Activated CD4-positive, alpha-beta T cell treated with anti-CD3 and anti-CD28 coated beads, Interleukin-2, amount 10 ng/mL, durations not matched to agents 7 days and 5 days (primary cell): ENCODE measurements at regions of chr4 and their contacts with region 1.

Region 1: GRCh38 chr4:10116580-10117358 is at the start of gene WDR1:
- DNase-seq: peak; percentile 90
- H3K4me3 Mint-ChIP-seq: peak within 1 kb of the TSS; percentile 99
- H3K27ac Mint-ChIP-seq: peak within 1 kb of the TSS; percentile 98
- H3K4me1 Mint-ChIP-seq: peaks cover 67% of the 10 kb centered on the region
- H3K27me3 Mint-ChIP-seq: no peaks in the 10 kb centered on the region
- total RNA-seq, gene WDR1: 452 to 454 TPM

Region 2: DNA sequence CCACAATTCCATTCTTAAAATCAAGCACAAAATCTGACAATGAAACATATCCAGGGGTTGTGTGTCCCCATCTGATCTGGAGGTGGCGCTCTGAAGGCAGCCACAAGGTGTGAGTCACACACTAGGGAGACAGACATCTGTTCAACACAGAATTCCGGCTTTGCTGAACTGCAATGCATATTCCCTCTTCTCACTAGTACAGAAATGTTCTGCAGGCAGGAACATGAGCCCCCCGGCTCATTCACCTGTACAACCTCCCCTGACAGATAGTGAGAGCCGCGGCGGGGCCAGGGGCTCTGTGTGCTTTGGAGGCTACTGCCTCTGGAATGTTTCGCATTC is 42.0 kb before region 1 on chr4:
- CTCF ChIA-PET with region 1: no interaction called
- POLR2A ChIA-PET with region 1: no interaction called
- DNase-seq: no peak
- H3K4me3 Mint-ChIP-seq: no peak overlapping the region
- H3K27ac Mint-ChIP-seq: no peak overlapping the region
- H3K4me1 Mint-ChIP-seq: no peaks in the 10 kb centered on the region
- H3K27me3 Mint-ChIP-seq: no peaks in the 10 kb centered on the region

Region 3: GRCh38 chr4:10096201-10096977 is 20.4 kb before region 1 on chr4:
- CTCF ChIA-PET with region 1: interaction called, 7 read pairs
- POLR2A ChIA-PET with region 1: interaction called, 11 read pairs
- DNase-seq: peak; percentile 84
- H3K4me3 Mint-ChIP-seq: peak overlapping the region; percentile 33
- H3K27ac Mint-ChIP-seq: peak overlapping the region; percentile 93
- H3K4me1 Mint-ChIP-seq: peaks cover 97% of the 10 kb centered on the region
- H3K27me3 Mint-ChIP-seq: no peaks in the 10 kb centered on the region

Region 4: DNA sequence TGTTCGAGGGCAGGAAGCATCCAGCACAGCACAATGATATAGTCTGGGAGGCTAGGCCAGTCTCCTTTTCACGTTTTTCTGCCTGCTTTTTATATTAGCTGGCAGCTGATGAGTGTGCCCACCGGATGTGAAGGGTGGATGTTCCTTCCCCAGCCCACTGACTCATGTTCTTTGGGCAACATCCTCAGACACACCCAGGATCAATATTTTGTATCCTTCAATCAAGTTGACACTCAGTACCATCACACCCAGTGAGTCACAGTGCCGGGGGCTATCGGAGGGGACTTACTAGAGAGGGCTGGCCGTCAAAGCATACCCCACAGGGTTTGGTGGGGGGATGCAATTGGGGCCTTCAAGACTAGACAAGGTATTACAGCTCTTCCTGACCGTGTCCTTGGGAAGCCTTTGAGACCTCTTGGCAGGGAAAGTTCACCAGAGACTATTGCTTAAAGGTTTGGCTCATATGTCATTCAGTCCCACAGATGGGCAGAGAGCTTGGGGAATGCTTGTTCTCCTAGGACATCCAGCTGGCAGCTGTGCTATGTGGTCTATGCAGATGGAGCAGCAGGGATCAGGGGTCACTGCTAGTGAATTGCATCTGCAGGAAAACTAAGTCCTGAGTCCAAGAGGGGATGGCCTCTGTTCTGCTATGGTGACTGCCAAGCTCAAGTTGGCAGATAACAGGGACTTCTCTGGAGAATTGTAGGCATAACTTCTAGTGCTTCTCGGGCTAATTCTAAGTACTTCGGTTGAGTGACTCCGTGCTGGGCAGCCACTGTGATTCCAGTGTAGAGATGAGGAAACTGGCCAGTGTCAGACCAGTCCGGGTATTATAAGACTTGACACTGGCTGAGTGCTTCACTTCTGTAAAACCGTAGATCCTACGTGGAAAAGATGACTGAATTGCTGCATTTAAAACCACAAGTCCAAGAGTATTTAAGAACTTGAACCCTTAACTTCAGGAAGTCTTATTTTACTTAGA is 12.7 kb after region 1 on chr4:
- CTCF ChIA-PET with region 1: interaction called, 27 read pairs
- POLR2A ChIA-PET with region 1: no interaction called
- DNase-seq: no peak
- H3K4me3 Mint-ChIP-seq: no peak overlapping the region
- H3K27ac Mint-ChIP-seq: no peak overlapping the region
- H3K4me1 Mint-ChIP-seq: peaks cover 3% of the 10 kb centered on the region
- H3K27me3 Mint-ChIP-seq: no peaks in the 10 kb centered on the region

Region 5: DNA sequence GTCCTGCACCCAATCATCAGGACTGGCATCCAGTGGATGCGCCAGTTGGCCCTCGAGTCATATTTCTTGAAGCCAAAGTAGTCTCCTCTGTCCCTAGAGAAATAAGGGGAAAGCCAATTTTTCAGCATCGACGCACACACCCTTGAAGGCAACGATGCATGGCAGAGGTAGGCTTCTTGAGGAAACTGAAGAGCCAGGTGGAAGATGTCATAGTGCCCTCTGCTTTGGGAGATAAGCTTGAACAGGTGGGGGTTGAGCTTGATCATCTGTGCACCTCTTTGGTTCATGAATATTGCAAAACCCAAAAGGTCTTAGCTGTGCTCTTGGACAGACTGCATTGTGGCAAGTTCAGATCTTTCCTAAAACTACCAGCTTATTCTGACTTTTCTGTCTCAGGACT is 34.4 kb after region 1 on chr4:
- CTCF ChIA-PET with region 1: no interaction called
- POLR2A ChIA-PET with region 1: no interaction called
- DNase-seq: no peak
- H3K4me3 Mint-ChIP-seq: no peak overlapping the region
- H3K27ac Mint-ChIP-seq: no peak overlapping the region
- H3K4me1 Mint-ChIP-seq: no peaks in the 10 kb centered on the region
- H3K27me3 Mint-ChIP-seq: no peaks in the 10 kb centered on the region